ENCODE measurements at regions of chr2 and their contacts with region 1.

Region 1: DNA sequence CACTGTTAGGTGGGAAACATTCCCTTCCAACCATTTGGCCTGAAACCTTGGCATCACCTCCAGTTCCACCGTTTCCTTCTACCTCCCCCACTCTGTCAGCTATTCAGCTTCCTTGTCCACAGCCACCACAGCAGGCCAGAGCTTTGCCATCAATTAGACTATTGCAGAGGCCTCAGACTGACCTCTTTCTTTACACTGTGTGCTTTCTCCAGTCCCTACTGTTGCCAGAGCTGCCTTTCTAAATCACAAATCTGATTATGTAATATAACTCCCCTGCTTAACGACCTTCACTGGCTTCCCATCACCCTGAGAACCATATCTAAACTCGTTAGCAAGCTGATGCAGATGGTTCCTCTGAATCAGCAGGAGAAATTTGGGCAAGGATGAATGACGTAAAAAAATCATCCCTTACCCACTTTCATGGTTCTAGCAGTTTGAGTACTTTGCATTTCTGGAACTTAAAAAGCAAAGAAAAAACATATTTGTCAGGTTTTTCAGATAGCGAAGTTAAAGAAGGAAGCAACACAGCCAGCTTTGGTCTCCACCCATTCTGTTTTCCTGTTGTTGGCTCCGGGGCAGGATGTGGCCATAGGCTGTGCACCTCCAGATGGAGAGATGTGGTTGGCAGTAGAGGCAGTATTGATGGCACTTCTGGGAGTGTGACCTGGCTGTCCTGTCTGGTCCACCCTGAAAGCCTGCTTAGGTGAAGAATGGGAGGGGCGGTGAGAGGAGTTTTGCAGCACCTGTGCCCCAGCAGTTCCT is 422.1 kb downstream of the PARD3B start:
- DNase-seq: peak; percentile 2 to 85 (median 59)
- ATAC-seq: peak; percentile 76
- H3K4me3 ChIP-seq: peak overlapping the region in 1 of 2 experiments; percentile 7
- H3K4me3 Mint-ChIP-seq: peak overlapping the region; percentile 60
- H3K27ac ChIP-seq: peak overlapping the region; percentile 46 to 61
- H3K27ac Mint-ChIP-seq: peak overlapping the region; percentile 96
- H3K4me1 ChIP-seq: peaks cover 64% of the 10 kb centered on the region
- H3K4me1 Mint-ChIP-seq: peaks cover 57% of the 10 kb centered on the region
- H3K27me3 ChIP-seq: no peaks in the 10 kb centered on the region
- H3K27me3 Mint-ChIP-seq: no peaks in the 10 kb centered on the region
- CTCF ChIP-seq: no peak

Region 2: DNA sequence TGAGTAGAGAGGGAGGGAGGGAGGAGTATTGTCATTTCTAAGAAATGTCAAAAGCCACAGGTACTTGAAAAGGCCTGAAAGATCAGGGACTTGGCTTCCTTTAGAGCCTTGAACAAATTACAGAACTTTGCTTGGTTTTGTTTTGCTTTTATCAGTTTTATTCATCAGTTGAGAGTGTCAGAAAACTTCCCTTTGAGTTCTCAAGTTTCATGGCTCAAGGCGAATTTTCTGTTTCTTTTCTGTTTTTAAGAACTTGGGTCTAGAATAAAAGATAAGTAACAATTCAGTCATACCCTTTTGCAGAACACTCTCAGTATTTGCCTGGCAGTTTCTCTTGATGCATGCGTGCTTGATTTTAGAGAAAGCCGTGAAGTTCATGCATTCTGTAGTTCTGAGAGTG is 109.8 kb after region 1 on chr2:
- CTCF ChIA-PET with region 1: interaction called, 4 read pairs
- POLR2A ChIA-PET with region 1: no interaction called
- intact Hi-C with region 1: loop called in 1 of 2 experiments (anchors 5 kb)
- DNase-seq: peak in 2 of 9 experiments; percentile 40 to 58
- ATAC-seq: peak; percentile 74
- H3K4me3 ChIP-seq: no peak overlapping the region
- H3K4me3 Mint-ChIP-seq: peak overlapping the region; percentile 72
- H3K27ac ChIP-seq: peak overlapping the region; percentile 15 to 31
- H3K27ac Mint-ChIP-seq: peak overlapping the region; percentile 93
- H3K4me1 ChIP-seq: peaks cover 38% of the 10 kb centered on the region
- H3K4me1 Mint-ChIP-seq: peaks cover 51% of the 10 kb centered on the region
- H3K27me3 ChIP-seq: no peaks in the 10 kb centered on the region
- H3K27me3 Mint-ChIP-seq: no peaks in the 10 kb centered on the region
- CTCF ChIP-seq: no peak

Region 3: GRCh38 chr2:205107810-205108209 is 140.4 kb after region 1 on chr2:
- CTCF ChIA-PET with region 1: no interaction called
- POLR2A ChIA-PET with region 1: no interaction called
- intact Hi-C with region 1: no loop called
- DNase-seq: no peak
- ATAC-seq: no peak
- H3K4me3 ChIP-seq: no peak overlapping the region
- H3K4me3 Mint-ChIP-seq: no peak overlapping the region
- H3K27ac ChIP-seq: no peak overlapping the region
- H3K27ac Mint-ChIP-seq: no peak overlapping the region
- H3K4me1 ChIP-seq: no peaks in the 10 kb centered on the region
- H3K4me1 Mint-ChIP-seq: no peaks in the 10 kb centered on the region
- H3K27me3 ChIP-seq: no peaks in the 10 kb centered on the region
- H3K27me3 Mint-ChIP-seq: no peaks in the 10 kb centered on the region
- CTCF ChIP-seq: no peak